CD4-positive, alpha-beta T cell (primary cell): ENCODE measurements at regions of chr12 and their contacts with region 1.

Region 1: GRCh38 chr12:109880016-109880931 is at the start of gene GLTP:
- DNase-seq: peak; percentile 78 to 97 (median 88)
- ATAC-seq: peak; percentile 96
- H3K4me3 ChIP-seq: peak within 1 kb of the TSS; percentile 98
- H3K4me3 Mint-ChIP-seq: peak within 1 kb of the TSS; percentile 92
- H3K27ac ChIP-seq: peak within 1 kb of the TSS; percentile 81 to 85
- H3K27ac Mint-ChIP-seq: peak within 1 kb of the TSS; percentile 87
- H3K4me1 ChIP-seq: peaks cover 35% of the 10 kb centered on the region
- H3K4me1 Mint-ChIP-seq: peaks cover 54% of the 10 kb centered on the region
- H3K27me3 ChIP-seq: no peaks in the 10 kb centered on the region
- H3K27me3 Mint-ChIP-seq: no peaks in the 10 kb centered on the region
- CTCF ChIP-seq: no peak
- total RNA-seq, gene GLTP: 24.8 to 25.2 TPM

Region 2: DNA sequence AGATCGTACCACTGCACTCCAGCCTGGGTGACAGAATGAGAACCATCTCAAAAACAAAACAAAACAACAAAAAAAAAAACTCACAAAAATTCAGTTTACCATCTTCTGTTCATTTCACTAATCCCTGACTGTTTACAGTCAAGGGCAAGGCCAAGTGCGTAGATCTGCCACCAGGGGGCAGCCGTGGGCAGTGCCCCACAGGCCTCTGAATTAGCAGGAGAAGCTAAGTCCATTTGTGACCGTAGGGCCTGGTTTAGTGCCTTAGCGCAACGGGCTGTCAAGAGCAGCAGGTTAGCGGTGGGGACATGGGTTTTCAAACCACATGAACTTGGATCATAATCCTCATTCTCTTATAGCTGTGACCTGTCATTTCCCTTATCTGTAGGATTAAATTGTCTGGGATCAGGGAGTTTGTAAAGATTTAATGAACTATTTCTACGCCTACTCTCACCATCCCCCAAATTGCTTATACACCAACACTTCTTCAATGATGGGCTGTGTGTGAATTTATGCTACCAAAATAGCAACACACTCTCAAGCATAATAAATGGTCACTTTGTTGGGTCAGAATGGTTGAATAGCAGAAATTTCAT is 452.1 kb before region 1 on chr12:
- CTCF ChIA-PET with region 1: no interaction called
- POLR2A ChIA-PET with region 1: no interaction called
- intact Hi-C with region 1: loop called in 1 of 2 experiments (anchors 2 kb)
- DNase-seq: peak; percentile 48 to 84 (median 68)
- ATAC-seq: peak; percentile 75
- H3K4me3 ChIP-seq: no peak overlapping the region
- H3K4me3 Mint-ChIP-seq: no peak overlapping the region
- H3K27ac ChIP-seq: no peak overlapping the region
- H3K27ac Mint-ChIP-seq: no peak overlapping the region
- H3K4me1 ChIP-seq: peaks cover 5% of the 10 kb centered on the region
- H3K4me1 Mint-ChIP-seq: peaks cover 6% of the 10 kb centered on the region
- H3K27me3 ChIP-seq: peaks cover 0 to 7% of the 10 kb centered on the region in 2 experiments
- H3K27me3 Mint-ChIP-seq: peaks cover 19% of the 10 kb centered on the region
- CTCF ChIP-seq: peak; percentile 93

Region 3: GRCh38 chr12:109518820-109519665 is 361.2 kb before region 1 on chr12:
- CTCF ChIA-PET with region 1: no interaction called
- POLR2A ChIA-PET with region 1: no interaction called
- intact Hi-C with region 1: loop called in 1 of 2 experiments (anchors 5 kb)
- DNase-seq: peak; percentile 27 to 72 (median 44)
- ATAC-seq: peak; percentile 63
- H3K4me3 ChIP-seq: no peak overlapping the region
- H3K4me3 Mint-ChIP-seq: no peak overlapping the region
- H3K27ac ChIP-seq: no peak overlapping the region
- H3K27ac Mint-ChIP-seq: no peak overlapping the region
- H3K4me1 ChIP-seq: no peaks in the 10 kb centered on the region
- H3K4me1 Mint-ChIP-seq: no peaks in the 10 kb centered on the region
- H3K27me3 ChIP-seq: no peaks in the 10 kb centered on the region
- H3K27me3 Mint-ChIP-seq: no peaks in the 10 kb centered on the region
- CTCF ChIP-seq: peak; percentile 72

Region 4: DNA sequence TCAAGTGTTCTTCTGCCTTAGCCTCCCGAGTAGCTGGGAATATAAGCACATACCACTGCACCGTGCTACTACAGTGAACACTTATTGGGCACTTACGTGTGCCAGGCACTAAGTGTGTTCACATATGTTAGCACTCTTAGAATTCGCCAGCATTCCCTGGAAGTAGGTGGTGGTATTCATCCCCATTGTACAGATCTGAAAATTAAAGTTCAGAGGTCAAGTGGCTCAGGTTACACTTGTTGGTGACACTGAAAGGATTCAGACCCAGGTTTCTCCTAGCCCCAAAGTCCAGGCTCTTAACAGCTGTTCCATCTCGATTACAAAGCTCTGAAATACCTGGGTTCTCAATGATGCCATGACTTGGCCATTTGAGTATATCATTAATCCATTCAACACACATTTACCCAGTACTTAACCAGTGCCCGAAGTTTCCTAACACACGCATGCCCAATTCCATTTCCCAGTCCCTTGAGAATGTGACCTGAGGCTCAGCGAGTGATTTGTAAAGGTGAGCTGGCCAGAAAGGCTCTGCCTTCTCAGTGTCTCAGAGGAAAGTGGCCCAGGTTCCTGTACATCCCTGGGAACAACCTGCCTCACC is 301.8 kb before region 1 on chr12:
- CTCF ChIA-PET with region 1: no interaction called
- POLR2A ChIA-PET with region 1: no interaction called
- intact Hi-C with region 1: loop called in 1 of 2 experiments (anchors 5 kb)
- DNase-seq: no peak
- ATAC-seq: no peak
- H3K4me3 ChIP-seq: no peak overlapping the region
- H3K4me3 Mint-ChIP-seq: no peak overlapping the region
- H3K27ac ChIP-seq: no peak overlapping the region
- H3K27ac Mint-ChIP-seq: no peak overlapping the region
- H3K4me1 ChIP-seq: peaks cover 8% of the 10 kb centered on the region
- H3K4me1 Mint-ChIP-seq: peaks cover 18% of the 10 kb centered on the region
- H3K27me3 ChIP-seq: no peaks in the 10 kb centered on the region
- H3K27me3 Mint-ChIP-seq: no peaks in the 10 kb centered on the region
- CTCF ChIP-seq: no peak

Region 5: GRCh38 chr12:109804820-109805761 is 75.2 kb before region 1 on chr12:
- CTCF ChIA-PET with region 1: interaction called, 4 read pairs
- POLR2A ChIA-PET with region 1: no interaction called
- intact Hi-C with region 1: loop called (anchors 1 kb)
- DNase-seq: peak; percentile 53 to 81 (median 62)
- ATAC-seq: peak; percentile 82
- H3K4me3 ChIP-seq: no peak overlapping the region
- H3K4me3 Mint-ChIP-seq: no peak overlapping the region
- H3K27ac ChIP-seq: no peak overlapping the region
- H3K27ac Mint-ChIP-seq: no peak overlapping the region
- H3K4me1 ChIP-seq: peaks cover 6% of the 10 kb centered on the region
- H3K4me1 Mint-ChIP-seq: no peaks in the 10 kb centered on the region
- H3K27me3 ChIP-seq: no peaks in the 10 kb centered on the region
- H3K27me3 Mint-ChIP-seq: peaks cover 5% of the 10 kb centered on the region
- CTCF ChIP-seq: peak; percentile 97

Region 6: GRCh38 chr12:109858764-109859163 is 21.5 kb before region 1 on chr12:
- CTCF ChIA-PET with region 1: no interaction called
- POLR2A ChIA-PET with region 1: no interaction called
- intact Hi-C with region 1: loop called (anchors 1 to 2 kb)
- DNase-seq: no peak
- ATAC-seq: no peak
- H3K4me3 ChIP-seq: no peak overlapping the region
- H3K4me3 Mint-ChIP-seq: no peak overlapping the region
- H3K27ac ChIP-seq: no peak overlapping the region
- H3K27ac Mint-ChIP-seq: no peak overlapping the region
- H3K4me1 ChIP-seq: peaks cover 1% of the 10 kb centered on the region
- H3K4me1 Mint-ChIP-seq: peaks cover 3% of the 10 kb centered on the region
- H3K27me3 ChIP-seq: no peaks in the 10 kb centered on the region
- H3K27me3 Mint-ChIP-seq: no peaks in the 10 kb centered on the region
- CTCF ChIP-seq: no peak